T-cell (primary cell): ENCODE measurements at regions of chr6 and their contacts with region 1.

Region 1: GRCh38 chr6:31834434-31835198 is 7.1 kb downstream of the HSPA1B start:
- DNase-seq: peak; percentile 59 to 87 (median 79)
- ATAC-seq: peak; percentile 77 to 79 (median 78)
- H3K4me3 ChIP-seq: peak overlapping the region; percentile 97 to 98
- H3K4me3 Mint-ChIP-seq: peak overlapping the region; percentile 94 to 98 (median 98)
- H3K27ac ChIP-seq: peak overlapping the region; percentile 97
- H3K27ac Mint-ChIP-seq: peak overlapping the region; percentile 98 to 100
- H3K4me1 ChIP-seq: peaks cover 27 to 64% of the 10 kb centered on the region in 2 experiments
- H3K4me1 Mint-ChIP-seq: peaks cover 44 to 62% (median 60%) of the 10 kb centered on the region in 3 donors
- H3K27me3 ChIP-seq: no peaks in the 10 kb centered on the region
- H3K27me3 Mint-ChIP-seq: no peaks in the 10 kb centered on the region

Region 2: GRCh38 chr6:31619805-31620585 is 214.6 kb before region 1 on chr6:
- CTCF ChIA-PET with region 1: interaction called in 1 of 2 experiments, 10 read pairs
- POLR2A ChIA-PET with region 1: no interaction called
- DNase-seq: peak; percentile 89 to 98 (median 95)
- ATAC-seq: peak; percentile 84 to 89 (median 88)
- H3K4me3 ChIP-seq: peak overlapping the region; percentile 61 to 65
- H3K4me3 Mint-ChIP-seq: peak overlapping the region; percentile 75 to 87 (median 83)
- H3K27ac ChIP-seq: peak overlapping the region; percentile 98
- H3K27ac Mint-ChIP-seq: peak overlapping the region; percentile 92 to 95
- H3K4me1 ChIP-seq: peaks cover 31 to 43% of the 10 kb centered on the region in 2 experiments
- H3K4me1 Mint-ChIP-seq: peaks cover 38 to 53% (median 46%) of the 10 kb centered on the region in 3 donors
- H3K27me3 ChIP-seq: no peaks in the 10 kb centered on the region
- H3K27me3 Mint-ChIP-seq: no peaks in the 10 kb centered on the region

Region 3: GRCh38 chr6:31652925-31653718 is 181.5 kb before region 1 on chr6:
- CTCF ChIA-PET with region 1: interaction called in 1 of 2 experiments, 10 read pairs
- POLR2A ChIA-PET with region 1: no interaction called
- DNase-seq: peak in 22 of 35 experiments; percentile 2 to 89 (median 83)
- ATAC-seq: peak; percentile 73 to 74 (median 73)
- H3K4me3 ChIP-seq: peak overlapping the region; percentile 75 to 90
- H3K4me3 Mint-ChIP-seq: peak overlapping the region; percentile 82 to 95 (median 90)
- H3K27ac ChIP-seq: peak overlapping the region; percentile 98
- H3K27ac Mint-ChIP-seq: peak overlapping the region; percentile 98 to 100
- H3K4me1 ChIP-seq: peaks cover 15 to 37% of the 10 kb centered on the region in 2 experiments
- H3K4me1 Mint-ChIP-seq: peaks cover 50 to 63% (median 60%) of the 10 kb centered on the region in 3 donors
- H3K27me3 ChIP-seq: no peaks in the 10 kb centered on the region
- H3K27me3 Mint-ChIP-seq: no peaks in the 10 kb centered on the region

Region 4: GRCh38 chr6:31729515-31729978 is 105.1 kb before region 1 on chr6:
- CTCF ChIA-PET with region 1: interaction called in 1 of 2 experiments, 29 read pairs
- POLR2A ChIA-PET with region 1: no interaction called
- DNase-seq: peak; percentile 54 to 88 (median 75)
- ATAC-seq: peak; percentile 71 to 80 (median 76)
- H3K4me3 ChIP-seq: peak overlapping the region; percentile 88 to 95
- H3K4me3 Mint-ChIP-seq: peak overlapping the region; percentile 94 to 96 (median 94)
- H3K27ac ChIP-seq: peak overlapping the region; percentile 22
- H3K27ac Mint-ChIP-seq: peak overlapping the region; percentile 86 to 90
- H3K4me1 ChIP-seq: peaks cover 17 to 58% of the 10 kb centered on the region in 2 experiments
- H3K4me1 Mint-ChIP-seq: peaks cover 49 to 64% (median 64%) of the 10 kb centered on the region in 3 donors
- H3K27me3 ChIP-seq: no peaks in the 10 kb centered on the region
- H3K27me3 Mint-ChIP-seq: no peaks in the 10 kb centered on the region

Region 5: DNA sequence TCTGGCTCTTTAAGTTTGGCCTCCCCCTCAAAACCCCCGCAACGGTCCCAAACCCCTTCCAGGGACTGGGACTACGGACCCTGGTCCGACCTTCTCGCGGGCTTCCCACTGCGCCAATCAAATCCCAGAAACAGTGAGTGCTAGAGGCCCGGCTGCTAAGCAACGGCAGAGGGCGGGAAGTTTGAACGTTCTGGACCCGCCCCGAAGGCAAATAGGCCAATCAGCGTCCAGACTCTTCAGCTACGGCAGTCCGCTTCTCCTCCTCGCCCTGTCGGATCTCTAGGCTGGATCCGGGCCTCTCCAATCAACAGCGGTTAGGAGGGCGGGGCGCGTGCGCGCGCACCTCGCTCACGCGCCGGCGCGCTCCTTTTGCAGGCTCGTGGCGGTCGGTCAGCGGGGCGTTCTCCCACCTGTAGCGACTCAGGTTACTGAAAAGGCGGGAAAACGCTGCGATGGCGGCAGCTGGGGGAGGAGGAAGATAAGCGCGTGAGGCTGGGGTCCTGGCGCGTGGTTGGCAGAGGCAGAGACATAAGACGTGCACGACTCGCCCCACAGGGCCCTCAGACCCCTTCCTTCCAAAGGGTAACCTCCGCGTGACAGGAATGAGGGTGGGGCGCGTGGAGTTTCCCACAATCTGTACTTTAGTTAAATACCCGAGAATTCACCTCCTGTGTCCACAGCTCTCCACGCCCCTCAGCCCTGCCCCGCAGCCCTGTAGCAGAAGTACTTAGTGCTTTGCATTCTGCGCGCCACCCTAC is 94.8 kb before region 1 on chr6 and contains the start of gene MSH5:
- CTCF ChIA-PET with region 1: interaction called, 6 to 12 read pairs
- POLR2A ChIA-PET with region 1: interaction called in 1 of 2 experiments, 3 read pairs
- DNase-seq: peak; percentile 81 to 96 (median 92)
- ATAC-seq: peak; percentile 89 to 93 (median 92)
- H3K4me3 ChIP-seq: peak within 1 kb of the TSS; percentile 82 to 92
- H3K4me3 Mint-ChIP-seq: peak within 1 kb of the TSS; percentile 85 to 95 (median 92)
- H3K27ac ChIP-seq: peak within 1 kb of the TSS; percentile 81
- H3K27ac Mint-ChIP-seq: peak within 1 kb of the TSS; percentile 88 to 95
- H3K4me1 ChIP-seq: peaks cover 39 to 53% of the 10 kb centered on the region in 2 experiments
- H3K4me1 Mint-ChIP-seq: peaks cover 56 to 62% (median 60%) of the 10 kb centered on the region in 3 donors
- H3K27me3 ChIP-seq: no peaks in the 10 kb centered on the region
- H3K27me3 Mint-ChIP-seq: no peaks in the 10 kb centered on the region
- total RNA-seq, gene MSH5: 13.7 to 22.4 (median 14.4) TPM

Region 6: DNA sequence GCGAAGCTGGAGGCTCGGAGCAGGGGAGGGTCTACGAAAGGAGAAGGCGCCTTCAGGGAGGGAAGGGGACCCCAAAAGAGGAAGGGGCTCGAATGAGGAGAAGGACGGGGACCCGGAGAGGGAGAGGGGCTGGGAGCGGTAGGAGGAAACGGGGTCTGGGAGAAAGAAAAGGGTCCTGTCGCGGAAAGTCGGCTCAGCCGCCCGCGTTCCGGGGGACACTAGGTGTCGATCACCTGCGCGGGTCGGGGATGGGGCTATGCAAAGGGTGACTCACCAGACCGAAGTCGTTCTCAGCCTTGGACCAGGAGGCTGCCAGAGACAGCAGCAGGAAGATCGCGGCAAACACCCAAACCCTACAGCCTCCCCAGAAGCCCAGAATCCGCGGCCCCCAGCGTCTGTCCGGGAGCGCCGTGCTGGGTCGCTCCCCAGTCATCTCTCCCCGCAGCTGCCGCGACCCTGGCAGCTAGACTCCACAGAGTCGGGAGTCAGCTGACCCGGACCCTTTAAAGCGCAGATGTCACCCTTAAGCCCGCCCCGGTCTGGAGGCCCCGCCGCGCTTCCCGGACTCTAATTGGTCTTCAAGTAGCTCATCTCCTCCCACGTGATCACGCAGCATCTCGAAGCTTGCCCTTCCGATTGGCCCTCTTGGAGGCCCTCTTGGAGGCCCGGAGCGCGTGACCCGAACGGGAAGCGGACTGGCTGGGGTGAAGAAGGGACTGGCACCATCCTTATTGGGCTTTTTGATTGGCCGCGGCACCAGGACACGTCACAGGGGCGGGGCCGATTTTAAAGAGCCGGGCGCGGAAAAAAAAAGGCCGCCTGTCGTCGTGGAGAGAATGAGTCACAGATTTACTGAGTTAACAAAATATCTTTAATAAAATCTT is 28.0 kb after region 1 on chr6 and contains the start of gene NEU1:
- CTCF ChIA-PET with region 1: interaction called in 1 of 2 experiments, 6 read pairs
- POLR2A ChIA-PET with region 1: interaction called in 1 of 2 experiments, 29 read pairs
- DNase-seq: peak; percentile 95 to 100 (median 99)
- ATAC-seq: peak; percentile 95 to 96 (median 96)
- H3K4me3 ChIP-seq: peak within 1 kb of the TSS; percentile 81 to 98
- H3K4me3 Mint-ChIP-seq: peak within 1 kb of the TSS; percentile 91 to 97 (median 93)
- H3K27ac ChIP-seq: peak within 1 kb of the TSS; percentile 91
- H3K27ac Mint-ChIP-seq: peak within 1 kb of the TSS; percentile 88 to 94
- H3K4me1 ChIP-seq: peaks cover 10 to 26% of the 10 kb centered on the region in 2 experiments
- H3K4me1 Mint-ChIP-seq: peaks cover 23 to 33% (median 23%) of the 10 kb centered on the region in 3 donors
- H3K27me3 ChIP-seq: peaks cover 0 to 8% of the 10 kb centered on the region in 2 experiments
- H3K27me3 Mint-ChIP-seq: no peaks in the 10 kb centered on the region
- total RNA-seq, gene NEU1: 15.9 to 29.2 (median 19.9) TPM